ENCODE measurements at regions of chr18 and their contacts with region 1.

Region 1: DNA sequence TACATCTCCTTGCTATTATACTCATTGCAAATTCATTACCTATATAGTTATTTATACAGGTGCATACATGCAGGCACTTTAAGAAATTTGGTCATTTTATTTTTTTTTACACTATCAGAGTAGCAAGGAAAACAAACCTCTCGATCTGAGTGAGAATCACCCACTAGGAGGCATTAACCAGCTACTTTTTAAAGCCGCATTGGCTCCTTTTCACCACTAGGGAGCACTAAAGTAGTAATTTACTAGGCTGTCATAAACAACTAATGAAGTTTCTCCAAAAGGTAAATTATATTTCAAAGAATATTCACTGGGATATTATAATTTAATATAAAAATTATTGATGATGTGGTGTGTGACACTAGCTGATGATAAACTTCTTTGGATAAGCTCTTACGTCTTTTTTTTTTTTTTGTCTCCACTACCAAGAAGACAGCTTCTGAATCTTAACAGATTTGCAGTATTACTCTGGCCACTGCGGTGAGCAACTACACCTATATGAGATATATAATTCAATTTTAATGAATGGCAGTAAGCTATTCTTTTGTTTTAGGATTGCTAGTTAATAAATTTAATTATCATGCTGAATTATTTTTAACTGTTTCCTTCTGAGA is 101.9 kb downstream of the NOL4 start:
- DNase-seq: no peak

Region 2: DNA sequence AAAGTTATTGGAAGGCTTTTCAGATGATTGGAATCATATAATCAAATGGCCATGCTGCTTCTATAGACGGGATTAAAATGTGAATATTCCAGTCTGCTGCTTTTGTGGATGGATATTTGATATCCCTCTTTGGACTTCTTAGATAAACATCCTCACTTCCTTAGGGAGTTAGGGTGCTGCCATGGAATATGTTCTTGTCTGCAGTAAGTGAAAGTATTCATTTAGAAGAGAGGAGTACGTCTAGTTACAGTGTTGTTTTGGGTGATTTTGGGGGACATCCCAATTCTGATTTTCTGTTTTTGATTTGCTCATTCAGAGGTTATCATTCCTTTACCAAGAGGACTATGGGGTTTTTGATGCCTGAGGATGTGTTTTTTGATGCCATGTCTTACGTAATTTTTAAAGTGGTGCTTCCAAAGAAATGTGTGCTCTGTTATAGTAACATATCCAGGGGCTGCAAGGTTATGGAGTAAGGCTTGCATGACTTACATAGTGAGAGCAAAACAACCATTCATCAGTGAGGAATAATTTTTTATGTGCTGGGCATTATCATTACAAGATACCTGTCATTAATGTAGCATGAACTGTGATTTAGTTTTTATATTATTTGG is 511.2 kb before region 1 on chr18:
- intact Hi-C with region 1: no loop called
- DNase-seq: no peak

Region 3: GRCh38 chr18:34322365-34323289 is 199.8 kb after region 1 on chr18:
- intact Hi-C with region 1: loop called (anchors 5 kb)
- DNase-seq: no peak

Region 4: GRCh38 chr18:34809451-34810072 is 686.7 kb after region 1 on chr18:
- intact Hi-C with region 1: loop called (anchors 10 kb)
- DNase-seq: no peak